Activated naive CD4-positive, alpha-beta T cell treated with anti-CD3 and anti-CD28 coated beads, Interleukin-2, amount 10 ng/mL, durations not matched to agents 7 days and 5 days (primary cell): ENCODE measurements at regions of chr15 and their contacts with region 1.

Region 1: DNA sequence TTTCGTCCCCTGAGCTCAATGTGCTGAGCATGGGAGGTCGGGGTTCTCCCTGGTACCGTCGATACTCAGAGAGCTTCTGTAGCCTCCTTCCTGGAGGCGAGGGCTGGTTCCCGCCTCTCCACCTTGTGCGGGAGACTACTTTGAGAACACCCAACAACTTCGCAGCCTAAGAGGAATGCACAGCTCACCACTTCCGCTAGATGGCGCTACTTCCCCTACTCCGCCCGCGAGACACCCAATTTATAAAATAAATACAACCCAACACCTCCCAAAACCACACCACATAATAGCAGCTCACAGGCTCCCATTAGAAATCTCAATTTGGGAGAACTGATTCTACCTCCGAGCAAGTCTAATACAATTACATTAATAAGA is 1.2 kb downstream of the RGMA start:
- DNase-seq: peak; percentile 81
- H3K4me3 Mint-ChIP-seq: peak overlapping the region; percentile 61
- H3K27ac Mint-ChIP-seq: no peak overlapping the region
- H3K4me1 Mint-ChIP-seq: peaks cover 11% of the 10 kb centered on the region
- H3K27me3 Mint-ChIP-seq: peaks cover 44% of the 10 kb centered on the region

Region 2: DNA sequence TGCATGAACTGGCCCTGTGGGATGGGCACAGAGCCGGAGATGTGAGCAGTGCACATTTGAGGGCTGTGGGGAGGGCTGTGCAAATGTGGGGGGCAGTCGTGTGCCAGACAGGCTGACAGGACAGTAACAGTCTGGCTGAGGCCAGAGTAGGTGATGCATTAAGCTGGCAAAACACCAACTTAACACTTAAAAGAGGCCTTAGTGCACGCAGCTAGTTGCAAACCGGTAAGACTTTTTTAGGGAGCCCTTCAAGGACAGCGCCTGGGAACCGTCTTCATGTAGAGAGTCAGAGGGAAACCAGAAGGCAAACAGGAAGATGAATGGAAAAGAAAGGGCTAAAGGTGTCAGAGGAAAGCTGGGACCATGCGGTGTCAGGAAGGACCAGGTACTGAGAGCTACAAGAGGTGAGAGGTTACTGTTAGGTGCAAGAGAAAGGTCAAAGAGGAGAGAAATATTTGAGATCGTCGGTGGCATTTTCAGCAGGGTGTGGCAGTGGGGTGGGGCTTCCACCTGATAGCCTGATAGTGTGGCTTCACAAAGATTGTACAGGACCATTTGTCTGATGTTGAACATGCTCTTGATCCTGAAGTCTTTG is 217.7 kb before region 1 on chr15:
- CTCF ChIA-PET with region 1: no interaction called
- DNase-seq: no peak
- H3K4me3 Mint-ChIP-seq: no peak overlapping the region
- H3K27ac Mint-ChIP-seq: no peak overlapping the region
- H3K4me1 Mint-ChIP-seq: peaks cover 8% of the 10 kb centered on the region
- H3K27me3 Mint-ChIP-seq: peaks cover 12% of the 10 kb centered on the region

Region 3: DNA sequence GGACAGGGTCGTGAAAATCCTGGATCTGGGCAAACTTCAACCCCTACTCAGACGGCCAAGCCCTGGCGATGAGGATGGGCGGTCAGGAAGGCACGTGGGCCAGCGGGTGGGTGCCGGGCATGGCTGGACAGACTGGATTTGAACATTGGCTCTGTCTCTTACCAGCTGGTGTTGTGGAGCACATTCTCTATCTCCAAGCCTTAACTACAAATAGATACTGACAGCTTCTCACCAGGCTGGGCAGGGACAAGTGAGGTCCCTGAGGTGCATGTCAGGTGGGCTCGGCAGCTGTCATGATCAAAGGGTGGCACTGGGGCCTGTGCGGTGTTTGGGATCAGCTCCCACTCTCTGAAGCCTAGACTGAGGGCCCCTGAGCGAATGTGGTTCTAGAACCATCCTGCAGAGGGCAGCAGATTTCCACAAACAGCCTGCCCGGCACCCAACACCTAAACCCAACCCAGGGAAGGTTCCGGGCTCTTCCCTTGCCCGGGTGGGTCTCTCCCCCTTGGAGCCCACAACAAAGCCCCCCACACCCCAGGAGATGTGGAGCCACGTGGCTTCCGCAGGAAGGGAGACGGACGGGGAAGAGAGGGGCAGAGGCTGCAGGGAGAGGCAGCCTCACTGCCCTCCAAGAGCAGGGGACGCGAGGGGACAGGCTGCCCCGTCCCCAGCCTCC is 57.2 kb before region 1 on chr15:
- CTCF ChIA-PET with region 1: interaction called, 16 read pairs
- DNase-seq: peak; percentile 78
- H3K4me3 Mint-ChIP-seq: no peak overlapping the region
- H3K27ac Mint-ChIP-seq: peak overlapping the region; percentile 49
- H3K4me1 Mint-ChIP-seq: peaks cover 16% of the 10 kb centered on the region
- H3K27me3 Mint-ChIP-seq: peaks cover 3% of the 10 kb centered on the region

Region 4: DNA sequence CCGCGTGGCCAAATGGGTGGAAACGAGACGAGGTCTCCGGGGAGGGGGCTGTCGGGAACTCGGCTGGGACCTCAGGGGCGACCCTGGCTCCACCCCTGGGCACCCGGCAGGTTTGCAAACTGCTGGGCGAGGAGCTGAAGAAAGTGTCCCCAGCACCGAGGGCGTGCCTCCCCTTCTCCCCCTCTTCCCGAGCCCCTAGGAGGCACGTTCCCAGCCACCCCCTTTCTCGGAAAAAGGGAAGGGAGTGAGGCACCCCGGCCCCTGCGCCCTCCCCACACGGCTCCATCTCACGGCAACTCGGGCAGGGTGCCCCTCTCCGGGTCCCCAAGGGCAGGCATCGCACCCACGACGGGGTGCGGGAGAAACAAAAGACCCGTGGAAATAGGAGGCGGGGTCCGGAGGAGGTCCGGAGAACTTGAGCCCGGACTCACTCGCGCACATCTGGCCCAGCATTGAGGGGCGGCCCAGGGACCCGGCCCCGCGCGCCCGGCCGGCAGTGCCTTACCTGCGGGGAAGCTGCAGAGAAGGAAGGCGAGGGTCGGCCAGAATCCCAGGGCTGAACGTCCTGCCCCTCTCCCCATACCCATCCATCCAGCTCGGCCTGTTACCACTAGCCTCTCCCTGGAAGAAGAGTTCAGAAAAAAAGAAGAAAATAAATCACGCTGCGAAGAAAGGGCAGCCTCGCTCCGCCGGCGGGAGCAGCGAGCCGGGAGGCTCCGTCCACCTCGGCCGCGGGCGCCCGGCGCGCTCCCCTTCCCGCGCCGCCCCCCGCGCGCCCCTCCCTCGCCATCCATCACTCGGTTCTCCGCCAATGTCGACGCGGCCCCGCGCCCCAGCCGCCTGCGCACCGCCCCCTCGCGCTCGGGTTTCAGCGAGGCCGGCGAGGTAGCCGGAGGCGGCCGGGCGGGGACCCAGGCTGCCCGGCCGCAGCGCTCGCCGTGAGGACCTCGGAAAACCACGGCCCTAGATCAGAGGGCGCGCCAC is 15.1 kb before region 1 on chr15:
- CTCF ChIA-PET with region 1: interaction called, 13 read pairs
- DNase-seq: no peak
- H3K4me3 Mint-ChIP-seq: peak overlapping the region; percentile 18
- H3K27ac Mint-ChIP-seq: no peak overlapping the region
- H3K4me1 Mint-ChIP-seq: peaks cover 15% of the 10 kb centered on the region
- H3K27me3 Mint-ChIP-seq: peaks cover 94% of the 10 kb centered on the region

Region 5: GRCh38 chr15:93173369-93173768 is 85.6 kb after region 1 on chr15:
- CTCF ChIA-PET with region 1: interaction called, 10 read pairs
- DNase-seq: no peak
- H3K4me3 Mint-ChIP-seq: no peak overlapping the region
- H3K27ac Mint-ChIP-seq: no peak overlapping the region
- H3K4me1 Mint-ChIP-seq: no peaks in the 10 kb centered on the region
- H3K27me3 Mint-ChIP-seq: peaks cover 28% of the 10 kb centered on the region

Region 6: DNA sequence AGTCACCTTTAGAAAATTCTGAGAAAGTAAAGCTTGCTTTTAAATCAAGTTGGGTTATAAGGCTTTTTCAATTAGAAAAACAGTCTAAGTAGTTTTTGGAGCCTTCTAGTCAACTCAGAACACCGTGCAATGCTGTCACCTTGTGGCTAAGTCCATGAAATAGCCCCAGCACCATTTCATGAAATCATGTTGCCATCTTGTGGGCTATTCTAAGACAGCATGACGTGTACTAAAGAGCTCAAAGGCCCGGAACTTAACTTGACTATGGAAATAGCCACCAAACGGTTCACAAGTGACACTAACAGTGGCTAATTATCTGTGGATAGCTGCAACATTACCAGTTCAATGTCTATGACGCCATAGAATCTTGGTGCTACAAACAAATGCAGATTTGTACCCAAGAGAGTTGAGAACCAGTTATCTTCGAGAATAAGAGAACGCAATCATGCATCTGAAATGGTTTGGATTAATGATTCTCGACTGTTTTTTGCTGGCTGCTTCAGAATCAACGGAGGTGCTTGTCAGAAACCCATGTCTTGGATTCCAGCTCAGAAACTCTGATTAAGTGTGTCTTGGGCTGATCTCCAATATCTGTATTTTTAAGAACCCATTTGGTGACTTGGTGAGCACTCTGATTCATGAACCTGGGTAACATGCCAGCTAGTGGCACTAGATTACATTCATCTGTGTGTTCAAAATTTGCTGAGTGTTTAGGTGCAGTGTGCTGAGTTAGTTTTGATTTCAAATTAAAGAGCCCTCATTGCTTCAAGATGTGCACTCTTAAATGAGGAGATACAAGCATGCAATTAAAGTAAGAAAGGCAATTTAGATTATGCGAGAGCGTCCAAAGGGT is 1032.3 kb after region 1 on chr15:
- CTCF ChIA-PET with region 1: interaction called, 19 read pairs
- DNase-seq: peak; percentile 62
- H3K4me3 Mint-ChIP-seq: no peak overlapping the region
- H3K27ac Mint-ChIP-seq: no peak overlapping the region
- H3K4me1 Mint-ChIP-seq: no peaks in the 10 kb centered on the region
- H3K27me3 Mint-ChIP-seq: no peaks in the 10 kb centered on the region